ENCODE measurements at regions of chr7 and their contacts with region 1.

Region 1: DNA sequence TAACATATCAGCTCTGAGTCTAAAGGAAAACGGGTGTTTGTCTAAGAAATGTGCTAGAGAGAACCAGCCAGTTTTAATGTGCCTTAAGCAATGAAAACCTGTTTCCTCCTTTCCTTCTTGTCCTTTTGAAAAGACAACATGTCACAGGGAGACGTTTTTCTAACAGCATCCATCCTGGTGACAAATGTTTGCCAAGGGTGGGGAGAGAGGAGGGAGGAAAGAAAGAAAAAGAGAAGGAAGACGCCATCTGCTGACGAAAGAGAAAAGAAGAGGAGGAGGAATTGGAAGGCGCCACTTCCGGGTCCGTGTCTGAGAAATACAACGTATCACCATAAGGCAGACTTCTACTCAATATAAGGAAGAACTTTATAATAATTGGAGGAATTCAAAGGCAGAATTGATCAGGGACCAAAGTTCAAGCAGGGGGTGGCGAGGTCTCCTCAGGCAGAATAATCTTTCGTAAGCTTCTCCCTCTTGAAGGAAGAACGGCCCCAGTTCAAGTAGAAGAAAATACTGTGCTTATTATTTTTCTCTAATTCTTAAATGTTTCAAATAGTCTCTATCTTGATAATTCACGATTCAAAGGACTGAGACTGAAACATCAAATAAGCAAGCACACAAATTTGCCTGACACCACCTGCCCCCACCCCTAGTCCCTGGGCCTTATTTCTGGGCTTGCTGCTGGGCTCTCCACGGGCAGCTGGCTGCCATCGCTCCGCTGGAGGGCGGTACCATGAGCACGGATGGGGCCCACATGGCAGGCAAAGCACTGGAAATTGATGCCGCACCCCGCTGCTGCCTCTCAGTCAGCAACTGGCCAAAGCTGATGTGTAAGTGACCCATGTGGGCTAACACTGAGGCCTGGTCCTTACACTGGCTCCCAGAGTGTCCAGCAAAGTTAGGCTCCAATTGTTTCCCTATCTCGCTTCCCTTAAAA is 273.7 kb upstream of the KLF14 start:
- DNase-seq: no peak
- ATAC-seq: peak; percentile 64
- H3K4me3 Mint-ChIP-seq: peak overlapping the region; percentile 46
- H3K27ac Mint-ChIP-seq: peak overlapping the region; percentile 89
- H3K4me1 Mint-ChIP-seq: peaks cover 88% of the 10 kb centered on the region
- H3K27me3 Mint-ChIP-seq: no peaks in the 10 kb centered on the region
- CTCF ChIP-seq: no peak

Region 2: DNA sequence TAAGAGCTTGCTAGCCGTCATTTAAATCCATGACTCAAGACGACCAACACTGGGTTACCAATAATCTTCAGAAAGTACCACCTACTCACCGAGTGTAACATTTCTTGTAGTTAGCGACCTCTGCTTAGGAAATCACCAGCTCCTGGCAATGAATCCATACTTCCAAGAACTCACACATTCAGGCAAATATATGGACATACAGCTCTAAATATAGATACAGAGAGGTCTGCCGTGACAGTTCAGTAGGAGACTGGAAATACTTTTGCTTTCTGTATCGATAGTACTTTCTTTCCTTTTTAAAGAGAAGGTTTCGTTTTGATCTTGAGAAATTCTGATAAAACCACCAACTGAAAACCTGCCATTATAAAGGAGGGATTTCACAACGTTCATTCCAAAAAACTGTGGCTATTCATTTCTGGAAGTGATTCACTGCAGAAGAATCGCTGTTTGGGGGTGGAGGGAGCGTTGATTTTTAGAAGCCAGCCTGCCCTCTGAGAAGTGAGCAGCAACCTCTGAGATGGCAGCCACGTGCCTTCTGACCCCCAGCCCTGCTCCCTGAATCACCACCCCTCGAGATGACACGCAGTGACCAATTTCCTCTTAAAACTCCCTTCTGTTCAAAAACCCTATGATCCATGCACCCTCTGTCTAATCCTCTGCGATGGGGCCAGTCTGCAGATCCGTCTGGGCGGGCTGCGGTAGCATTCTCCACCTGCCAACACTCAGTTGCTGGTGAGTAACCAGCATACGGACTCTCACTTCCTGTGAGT is 94.6 kb before region 1 on chr7:
- CTCF ChIA-PET with region 1: no interaction called
- POLR2A ChIA-PET with region 1: no interaction called
- intact Hi-C with region 1: loop called (anchors 1 kb)
- DNase-seq: peak; percentile 54
- ATAC-seq: peak; percentile 91
- H3K4me3 Mint-ChIP-seq: peak overlapping the region; percentile 87
- H3K27ac Mint-ChIP-seq: peak overlapping the region; percentile 90
- H3K4me1 Mint-ChIP-seq: peaks cover 86% of the 10 kb centered on the region
- H3K27me3 Mint-ChIP-seq: no peaks in the 10 kb centered on the region
- CTCF ChIP-seq: no peak

Region 3: DNA sequence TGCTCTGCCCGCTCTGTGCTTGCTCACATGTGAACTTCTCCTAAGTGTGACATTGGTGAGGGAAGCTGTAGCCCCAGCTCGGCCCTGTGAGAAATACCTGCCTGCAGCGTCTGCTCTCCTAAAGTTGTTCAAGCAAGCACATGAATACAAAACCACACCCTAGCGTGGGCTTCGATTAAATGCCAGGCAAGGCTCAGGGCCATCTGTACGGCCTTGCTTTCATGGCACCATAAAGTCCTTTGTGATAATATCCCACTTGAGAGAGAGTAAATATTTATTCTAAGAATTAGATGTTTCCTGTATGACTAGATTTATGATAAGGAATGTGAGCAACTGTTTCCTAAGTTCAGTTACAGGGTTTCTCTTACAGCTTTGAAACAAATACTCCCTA is 10.8 kb before region 1 on chr7:
- CTCF ChIA-PET with region 1: interaction called, 3 read pairs
- POLR2A ChIA-PET with region 1: interaction called, 8 read pairs
- intact Hi-C with region 1: loop called (anchors 1 kb)
- DNase-seq: no peak
- ATAC-seq: peak; percentile 81
- H3K4me3 Mint-ChIP-seq: peak overlapping the region; percentile 4
- H3K27ac Mint-ChIP-seq: peak overlapping the region; percentile 79
- H3K4me1 Mint-ChIP-seq: peaks cover 77% of the 10 kb centered on the region
- H3K27me3 Mint-ChIP-seq: no peaks in the 10 kb centered on the region
- CTCF ChIP-seq: no peak

Region 4: GRCh38 chr7:131021460-131021859 is 13.8 kb after region 1 on chr7:
- CTCF ChIA-PET with region 1: interaction called, 6 read pairs
- POLR2A ChIA-PET with region 1: interaction called, 9 read pairs
- intact Hi-C with region 1: loop called (anchors 1 kb)
- DNase-seq: no peak
- ATAC-seq: peak; percentile 43
- H3K4me3 Mint-ChIP-seq: peak overlapping the region; percentile 57
- H3K27ac Mint-ChIP-seq: peak overlapping the region; percentile 83
- H3K4me1 Mint-ChIP-seq: peaks cover 77% of the 10 kb centered on the region
- H3K27me3 Mint-ChIP-seq: no peaks in the 10 kb centered on the region
- CTCF ChIP-seq: no peak

Region 5: GRCh38 chr7:131027287-131027773 is 19.7 kb after region 1 on chr7:
- CTCF ChIA-PET with region 1: interaction called, 6 read pairs
- POLR2A ChIA-PET with region 1: interaction called, 9 read pairs
- intact Hi-C with region 1: loop called (anchors 1 kb)
- DNase-seq: no peak
- ATAC-seq: peak; percentile 6
- H3K4me3 Mint-ChIP-seq: peak overlapping the region; percentile 66
- H3K27ac Mint-ChIP-seq: peak overlapping the region; percentile 98
- H3K4me1 Mint-ChIP-seq: peaks cover 93% of the 10 kb centered on the region
- H3K27me3 Mint-ChIP-seq: no peaks in the 10 kb centered on the region
- CTCF ChIP-seq: no peak

Region 6: GRCh38 chr7:131040467-131040932 is 32.8 kb after region 1 on chr7:
- CTCF ChIA-PET with region 1: interaction called, 15 read pairs
- POLR2A ChIA-PET with region 1: interaction called, 5 read pairs
- intact Hi-C with region 1: no loop called
- DNase-seq: no peak
- ATAC-seq: peak; percentile 75
- H3K4me3 Mint-ChIP-seq: peak overlapping the region; percentile 60
- H3K27ac Mint-ChIP-seq: peak overlapping the region; percentile 81
- H3K4me1 Mint-ChIP-seq: peaks cover 56% of the 10 kb centered on the region
- H3K27me3 Mint-ChIP-seq: no peaks in the 10 kb centered on the region
- CTCF ChIP-seq: peak; percentile 61